Posterior vena cava (tissue), 2 donors: ENCODE measurements at regions of chrX and their contacts with region 1.

Region 1: DNA sequence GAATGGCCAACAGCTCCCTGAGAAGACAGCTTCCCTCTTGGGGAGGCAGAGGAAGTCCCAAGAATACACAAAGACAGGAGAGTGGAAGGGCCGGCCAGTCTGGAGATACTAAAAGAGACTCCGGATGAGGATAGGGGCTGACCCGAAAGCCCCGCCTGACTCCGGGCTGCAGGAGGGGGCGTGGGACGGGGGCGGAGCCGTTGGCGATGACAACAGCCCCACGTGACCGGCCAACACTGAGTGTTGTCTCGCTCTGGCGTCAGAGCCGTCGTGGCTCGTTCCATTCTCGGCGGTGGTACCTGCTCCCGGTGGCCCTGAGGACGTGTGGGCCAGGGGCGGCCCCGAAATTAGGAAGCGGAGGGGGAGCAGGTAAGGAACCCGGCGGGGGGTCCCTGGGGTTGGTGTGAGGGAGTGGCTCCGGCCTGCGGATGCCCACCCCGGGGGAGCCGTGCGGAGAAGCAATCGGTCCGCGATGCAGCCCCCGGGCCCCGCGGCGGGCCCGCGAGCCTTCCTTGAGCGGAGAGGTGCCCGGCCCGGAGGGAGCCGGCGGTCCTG is at the start of gene BEX4:
- DNase-seq: peak; percentile 94
- total RNA-seq, gene BEX4: 22.2 to 22.9 TPM

Region 2: DNA sequence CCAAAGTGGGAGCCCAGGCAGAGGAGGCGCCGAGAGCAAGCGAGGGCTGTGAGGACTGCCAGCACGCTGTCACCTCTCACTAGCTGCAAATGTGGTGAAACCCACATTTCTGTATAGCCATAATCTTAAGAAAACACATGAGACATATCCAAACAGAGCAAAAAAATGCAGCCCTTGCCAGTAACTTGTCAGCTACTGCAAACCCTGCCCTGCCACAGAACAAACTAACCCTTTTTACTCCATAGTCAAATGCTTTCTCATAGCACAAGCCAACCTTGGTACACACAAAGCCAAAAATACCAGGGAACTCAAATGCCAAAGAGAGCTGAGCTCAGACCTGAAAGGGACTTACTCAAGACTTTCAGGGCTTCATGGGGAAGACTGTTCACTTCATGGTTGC is 107.1 kb before region 1 on chrX:
- intact Hi-C with region 1: no loop called
- DNase-seq: no peak

Region 3: GRCh38 chrX:103254921-103255493 is 40.1 kb after region 1 on chrX and contains the start of gene TCEAL8:
- intact Hi-C with region 1: loop called in 1 of 2 experiments (anchors 5 kb)
- DNase-seq: peak; percentile 93
- total RNA-seq, gene TCEAL8: 41.1 to 51.6 TPM

Region 4: GRCh38 chrX:105210258-105210657 is 1995.3 kb after region 1 on chrX:
- intact Hi-C with region 1: loop called in 1 of 2 experiments (anchors 5 kb)
- DNase-seq: no peak